ENCODE measurements at regions of chr3 and their contacts with region 1.

Region 1: DNA sequence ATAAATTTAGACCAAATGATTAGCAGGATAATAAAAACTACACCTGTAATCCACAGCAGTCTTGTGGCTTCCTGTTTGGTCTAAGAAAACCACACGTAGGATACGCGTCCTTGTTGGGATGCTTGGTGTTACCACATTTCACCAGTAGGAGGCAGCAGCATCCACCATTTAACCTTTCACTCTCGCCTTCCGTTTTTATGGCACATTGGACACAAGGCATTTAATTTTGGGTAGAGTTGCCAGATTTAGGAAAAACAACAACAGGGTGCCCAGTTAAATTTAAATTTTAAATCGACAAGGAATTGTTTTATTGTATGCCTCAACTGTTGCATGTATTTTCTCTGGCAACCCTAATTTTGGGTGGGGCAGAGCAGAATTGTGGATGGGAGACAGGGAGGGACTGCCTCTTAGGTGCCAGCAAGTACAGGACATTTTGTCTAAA is 6.3 kb downstream of the LRRC31 start:
- DNase-seq: peak; percentile 34
- H3K4me3 ChIP-seq: no peak overlapping the region
- H3K27ac ChIP-seq: no peak overlapping the region
- H3K27me3 ChIP-seq: no peaks in the 10 kb centered on the region
- CTCF ChIP-seq: peak; percentile 91

Region 2: DNA sequence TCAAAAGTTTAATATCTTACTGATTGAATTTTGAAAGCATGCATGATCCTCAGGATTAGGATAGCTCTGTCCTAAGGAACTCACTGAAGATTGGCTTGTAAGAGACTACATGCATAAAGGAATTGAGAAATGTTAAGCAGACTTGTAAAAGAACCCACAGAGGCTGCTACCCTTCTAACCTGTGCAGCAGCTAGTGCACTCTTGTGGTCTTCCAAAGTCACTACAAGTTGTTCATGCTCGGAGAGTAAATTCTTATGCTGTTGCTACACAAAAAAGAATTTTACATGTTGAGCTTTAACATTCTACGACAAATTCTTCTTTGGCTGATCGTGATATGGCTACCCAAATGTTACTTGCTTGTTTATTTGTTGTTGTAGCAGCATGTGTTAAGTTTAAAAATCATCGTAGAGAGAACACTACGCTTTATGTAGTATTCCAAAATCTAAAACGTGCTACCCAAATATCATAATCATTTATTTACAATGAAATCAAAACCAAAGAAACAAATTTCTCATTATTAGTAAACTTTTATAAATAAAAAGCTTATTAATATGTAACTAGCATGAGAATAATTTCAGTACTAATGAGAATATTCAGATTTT is 1822.8 kb before region 1 on chr3:
- CTCF ChIA-PET with region 1: no interaction called
- POLR2A ChIA-PET with region 1: no interaction called
- DNase-seq: peak; percentile 43
- H3K4me3 ChIP-seq: no peak overlapping the region
- H3K27ac ChIP-seq: no peak overlapping the region
- H3K27me3 ChIP-seq: no peaks in the 10 kb centered on the region
- CTCF ChIP-seq: peak; percentile 84

Region 3: DNA sequence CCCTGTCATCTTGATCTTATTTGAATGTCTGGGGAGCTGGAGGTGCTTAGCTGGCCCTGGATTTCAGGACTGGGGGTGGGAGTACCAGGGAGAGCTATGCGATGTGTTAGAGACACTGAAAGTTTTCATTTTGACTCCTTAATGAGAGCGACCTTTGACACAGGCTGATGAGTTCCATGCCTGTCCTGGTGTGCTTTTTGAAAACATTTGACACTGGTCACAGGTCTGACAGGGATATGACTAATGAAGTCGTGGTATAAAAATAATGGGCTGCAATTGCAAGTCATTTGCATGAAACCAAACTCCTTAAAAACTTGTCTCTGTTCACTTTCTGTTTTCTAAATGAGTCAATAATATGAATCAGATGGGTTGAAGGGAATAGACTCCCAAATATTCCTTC is 281.8 kb before region 1 on chr3:
- CTCF ChIA-PET with region 1: no interaction called
- POLR2A ChIA-PET with region 1: no interaction called
- DNase-seq: no peak
- H3K4me3 ChIP-seq: no peak overlapping the region
- H3K27ac ChIP-seq: no peak overlapping the region
- H3K27me3 ChIP-seq: no peaks in the 10 kb centered on the region
- CTCF ChIP-seq: no peak

Region 4: GRCh38 chr3:169764452-169765274 is 98.8 kb before region 1 on chr3 and contains the start of gene TERC:
- CTCF ChIA-PET with region 1: no interaction called
- POLR2A ChIA-PET with region 1: no interaction called
- DNase-seq: peak; percentile 69
- H3K4me3 ChIP-seq: peak within 1 kb of the TSS; percentile 83
- H3K27ac ChIP-seq: peak within 1 kb of the TSS; percentile 88
- H3K27me3 ChIP-seq: no peaks in the 10 kb centered on the region
- CTCF ChIP-seq: no peak
- polyA plus RNA-seq, gene TERC: not detected in 2 replicates

Region 5: DNA sequence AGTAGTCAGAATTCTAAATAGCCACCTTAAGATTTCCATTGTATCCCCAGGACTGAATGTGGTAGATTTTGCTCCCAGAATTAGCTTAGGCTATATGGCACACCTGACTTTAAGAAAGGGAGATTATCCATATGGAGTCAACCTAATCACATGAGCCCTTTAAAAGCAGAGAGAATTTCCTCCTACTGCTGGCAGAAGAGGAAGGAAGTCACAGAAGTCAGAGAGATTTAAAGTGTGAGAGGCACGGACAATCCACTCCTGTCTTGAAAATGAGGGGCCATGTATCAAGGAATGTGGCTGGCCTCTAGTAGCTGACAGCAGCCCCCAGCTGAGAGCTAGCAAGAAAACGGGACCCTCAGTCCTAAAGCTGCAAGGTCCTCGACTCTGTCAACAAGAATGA is 20.5 kb before region 1 on chr3:
- CTCF ChIA-PET with region 1: interaction called, 12 read pairs
- POLR2A ChIA-PET with region 1: no interaction called
- DNase-seq: no peak
- H3K4me3 ChIP-seq: no peak overlapping the region
- H3K27ac ChIP-seq: no peak overlapping the region
- H3K27me3 ChIP-seq: no peaks in the 10 kb centered on the region
- CTCF ChIP-seq: no peak